Activated naive CD4-positive, alpha-beta T cell treated with anti-CD3 and anti-CD28 coated beads for 36 hours (primary cell): ENCODE measurements at regions of chr22 and their contacts with region 1.

Region 1: GRCh38 chr22:29245637-29246385 is 22.0 kb downstream of the RHBDD3 start:
- DNase-seq: peak; percentile 80
- H3K4me3 Mint-ChIP-seq: no peak overlapping the region
- H3K27ac Mint-ChIP-seq: no peak overlapping the region
- H3K4me1 Mint-ChIP-seq: peaks cover 2% of the 10 kb centered on the region
- H3K27me3 Mint-ChIP-seq: peaks cover 5% of the 10 kb centered on the region

Region 2: DNA sequence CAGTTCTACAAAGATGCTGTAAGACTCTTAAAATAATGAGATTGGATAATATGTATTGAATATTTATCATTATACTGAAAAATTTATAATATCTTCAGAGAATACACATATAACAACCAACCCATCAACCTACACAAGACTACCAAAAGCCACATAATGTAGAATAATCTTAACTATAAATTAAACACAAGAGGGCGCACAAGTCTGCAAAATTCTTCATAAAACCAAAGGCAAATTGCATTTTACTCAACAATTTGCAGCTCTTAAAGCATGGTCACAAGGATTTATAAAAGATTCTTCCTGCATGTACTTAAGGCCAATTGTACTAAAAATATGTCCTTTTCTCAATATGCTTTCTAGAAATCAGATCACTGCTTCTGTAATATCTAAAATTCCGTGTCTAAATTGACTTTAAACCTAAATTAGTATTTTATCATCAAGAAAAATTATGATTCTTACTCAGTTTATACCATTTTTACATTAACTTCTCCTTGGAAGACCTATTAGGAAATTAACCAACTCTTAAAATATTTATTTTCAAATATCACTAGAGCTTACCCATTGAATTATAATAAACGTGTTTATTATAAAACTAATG is 645.2 kb before region 1 on chr22:
- CTCF ChIA-PET with region 1: interaction called, 3 read pairs
- intact Hi-C with region 1: loop called (anchors 1 kb)
- DNase-seq: no peak
- H3K4me3 Mint-ChIP-seq: no peak overlapping the region
- H3K27ac Mint-ChIP-seq: no peak overlapping the region
- H3K4me1 Mint-ChIP-seq: no peaks in the 10 kb centered on the region
- H3K27me3 Mint-ChIP-seq: peaks cover 7% of the 10 kb centered on the region

Region 3: GRCh38 chr22:28855355-28856094 is 390.3 kb before region 1 on chr22:
- CTCF ChIA-PET with region 1: interaction called, 3 read pairs
- intact Hi-C with region 1: loop called (anchors 1 kb)
- DNase-seq: peak; percentile 64
- H3K4me3 Mint-ChIP-seq: no peak overlapping the region
- H3K27ac Mint-ChIP-seq: no peak overlapping the region
- H3K4me1 Mint-ChIP-seq: no peaks in the 10 kb centered on the region
- H3K27me3 Mint-ChIP-seq: peaks cover 2% of the 10 kb centered on the region

Region 4: GRCh38 chr22:29040385-29041275 is 205.2 kb before region 1 on chr22:
- CTCF ChIA-PET with region 1: interaction called, 8 read pairs
- intact Hi-C with region 1: loop called (anchors 5 kb)
- DNase-seq: peak; percentile 80
- H3K4me3 Mint-ChIP-seq: no peak overlapping the region
- H3K27ac Mint-ChIP-seq: no peak overlapping the region
- H3K4me1 Mint-ChIP-seq: no peaks in the 10 kb centered on the region
- H3K27me3 Mint-ChIP-seq: peaks cover 2% of the 10 kb centered on the region

Region 5: DNA sequence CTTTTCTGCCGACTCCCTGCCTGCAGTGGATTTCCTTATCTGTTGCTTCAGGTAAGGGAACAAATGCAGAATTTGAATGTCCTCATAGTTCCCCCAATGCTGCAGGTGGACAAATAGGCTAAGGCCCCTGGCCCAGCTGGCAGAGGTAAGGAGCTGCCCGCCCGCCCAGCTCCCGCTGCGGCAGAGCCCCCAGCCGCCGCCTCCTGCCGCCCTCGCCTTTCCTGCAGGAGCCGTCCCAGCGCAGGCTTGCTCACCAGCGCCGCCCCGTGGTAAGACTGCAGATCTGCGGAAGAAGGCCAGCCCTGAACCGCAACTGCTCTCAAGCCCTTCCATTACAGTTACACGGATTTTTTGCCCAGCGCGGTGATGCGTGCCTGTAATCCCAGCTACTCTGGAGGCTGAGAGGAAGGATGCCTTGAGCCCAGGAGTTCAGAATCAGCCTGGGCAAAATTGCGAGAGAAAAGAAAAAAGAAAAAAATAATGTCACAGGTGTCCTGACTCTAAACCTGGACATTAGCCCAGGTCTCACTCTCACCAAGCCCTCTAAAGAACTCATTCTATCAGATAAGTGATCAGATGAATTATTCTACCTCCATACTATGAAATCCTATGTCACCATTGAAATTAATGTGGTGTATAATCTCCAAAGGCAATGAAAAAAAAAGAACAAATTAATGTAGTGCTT is 91.3 kb before region 1 on chr22:
- CTCF ChIA-PET with region 1: interaction called, 12 read pairs
- intact Hi-C with region 1: loop called (anchors 2 kb)
- DNase-seq: peak; percentile 84
- H3K4me3 Mint-ChIP-seq: no peak overlapping the region
- H3K27ac Mint-ChIP-seq: no peak overlapping the region
- H3K4me1 Mint-ChIP-seq: peaks cover 6% of the 10 kb centered on the region
- H3K27me3 Mint-ChIP-seq: peaks cover 34% of the 10 kb centered on the region

Region 6: GRCh38 chr22:29202212-29203192 is 43.3 kb before region 1 on chr22:
- CTCF ChIA-PET with region 1: interaction called, 13 read pairs
- intact Hi-C with region 1: loop called (anchors 1 kb)
- DNase-seq: peak; percentile 65
- H3K4me3 Mint-ChIP-seq: no peak overlapping the region
- H3K27ac Mint-ChIP-seq: no peak overlapping the region
- H3K4me1 Mint-ChIP-seq: peaks cover 6% of the 10 kb centered on the region
- H3K27me3 Mint-ChIP-seq: peaks cover 42% of the 10 kb centered on the region